Calu3 (cell line): ENCODE measurements at regions of chr20 and their contacts with region 1.

Region 1: DNA sequence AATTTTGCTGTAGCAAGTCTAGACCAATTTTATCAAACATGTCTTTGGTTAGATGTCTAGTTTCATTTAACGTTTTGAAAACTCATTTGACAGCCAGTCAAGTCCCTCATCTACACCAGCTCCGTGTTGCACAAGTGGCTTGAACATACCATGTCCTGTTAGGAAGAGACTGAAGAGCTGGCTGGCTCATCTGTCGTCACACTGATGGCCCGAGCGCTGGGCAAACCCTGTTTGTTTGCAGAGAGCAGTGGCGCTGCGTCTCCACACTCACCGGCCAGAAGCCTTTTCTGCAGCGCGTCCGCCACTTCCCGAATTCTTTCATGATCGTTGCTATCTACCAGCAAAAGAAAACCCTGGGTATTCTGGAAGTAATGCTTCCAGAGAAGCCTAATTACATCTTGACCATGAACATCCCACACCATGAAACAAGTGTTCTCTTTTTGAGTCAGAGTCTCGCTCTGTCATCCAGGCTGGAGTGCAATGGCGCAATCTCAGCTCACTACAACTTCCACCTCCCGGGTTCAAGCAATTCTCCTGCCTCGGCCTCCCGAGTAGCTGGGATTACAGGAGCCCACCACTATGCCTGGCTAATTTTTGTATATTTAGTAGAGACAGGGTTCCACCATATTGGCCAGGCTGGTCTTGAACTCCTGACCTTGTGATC is 10.7 kb upstream of the TCFL5 start:
- DNase-seq: no peak
- H3K4me3 Mint-ChIP-seq: no peak overlapping the region
- H3K27ac Mint-ChIP-seq: no peak overlapping the region
- H3K4me1 Mint-ChIP-seq: peaks cover 23% of the 10 kb centered on the region
- H3K27me3 Mint-ChIP-seq: peaks cover 14% of the 10 kb centered on the region
- CTCF ChIP-seq: no peak

Region 2: GRCh38 chr20:63009045-63009961 is 137.0 kb after region 1 on chr20:
- CTCF ChIA-PET with region 1: interaction called, 7 read pairs
- intact Hi-C with region 1: loop called (anchors 2 kb)
- DNase-seq: peak; percentile 91
- H3K4me3 Mint-ChIP-seq: peak overlapping the region; percentile 51
- H3K27ac Mint-ChIP-seq: no peak overlapping the region
- H3K4me1 Mint-ChIP-seq: peaks cover 13% of the 10 kb centered on the region
- H3K27me3 Mint-ChIP-seq: peaks cover 96% of the 10 kb centered on the region
- CTCF ChIP-seq: peak; percentile 97